ENCODE measurements at regions of chr7 and their contacts with region 1.

Region 1: GRCh38 chr7:44490351-44491200 is at the start of gene NUDCD3:
- DNase-seq: peak; percentile 73
- H3K4me3 Mint-ChIP-seq: peak within 1 kb of the TSS; percentile 88
- H3K27ac Mint-ChIP-seq: peak within 1 kb of the TSS; percentile 93
- H3K4me1 Mint-ChIP-seq: peaks cover 44% of the 10 kb centered on the region
- H3K27me3 Mint-ChIP-seq: no peaks in the 10 kb centered on the region
- total RNA-seq, gene NUDCD3: 77.9 and 83.1 TPM in 2 replicates

Region 2: GRCh38 chr7:43906331-43907010 is 584.1 kb before region 1 on chr7 and contains the start of gene URGCP:
- intact Hi-C with region 1: loop called (anchors 10 kb)
- DNase-seq: peak; percentile 46
- H3K4me3 Mint-ChIP-seq: peak within 1 kb of the TSS; percentile 95
- H3K27ac Mint-ChIP-seq: peak within 1 kb of the TSS; percentile 97
- H3K4me1 Mint-ChIP-seq: peaks cover 28% of the 10 kb centered on the region
- H3K27me3 Mint-ChIP-seq: peaks cover 2% of the 10 kb centered on the region
- total RNA-seq, gene URGCP: 32.2 and 34.4 TPM in 2 replicates

Region 3: GRCh38 chr7:44573464-44574286 is 83.1 kb after region 1 on chr7 and contains the start of gene DDX56:
- intact Hi-C with region 1: loop called (anchors 1 kb)
- DNase-seq: peak; percentile 93
- H3K4me3 Mint-ChIP-seq: peak within 1 kb of the TSS; percentile 88
- H3K27ac Mint-ChIP-seq: peak within 1 kb of the TSS; percentile 95
- H3K4me1 Mint-ChIP-seq: peaks cover 32% of the 10 kb centered on the region
- H3K27me3 Mint-ChIP-seq: no peaks in the 10 kb centered on the region
- total RNA-seq, gene DDX56: 165 and 166 TPM in 2 replicates

Region 4: GRCh38 chr7:44735403-44736165 is 245.0 kb after region 1 on chr7:
- intact Hi-C with region 1: loop called (anchors 10 kb)
- DNase-seq: peak; percentile 42
- H3K4me3 Mint-ChIP-seq: peak overlapping the region; percentile 50
- H3K27ac Mint-ChIP-seq: peak overlapping the region; percentile 89
- H3K4me1 Mint-ChIP-seq: peaks cover 29% of the 10 kb centered on the region
- H3K27me3 Mint-ChIP-seq: peaks cover 2% of the 10 kb centered on the region

Region 5: GRCh38 chr7:44784364-44784763 is 293.8 kb after region 1 on chr7:
- intact Hi-C with region 1: no loop called
- DNase-seq: no peak
- H3K4me3 Mint-ChIP-seq: no peak overlapping the region
- H3K27ac Mint-ChIP-seq: no peak overlapping the region
- H3K4me1 Mint-ChIP-seq: no peaks in the 10 kb centered on the region
- H3K27me3 Mint-ChIP-seq: peaks cover 2% of the 10 kb centered on the region